AG04449 (cell line): ENCODE measurements at regions of chr9 and their contacts with region 1.

Region 1: GRCh38 chr9:16028548-16028947 is 475.7 kb downstream of the CCDC171 start:
- DNase-seq: no peak
- H3K4me3 ChIP-seq: no peak overlapping the region
- CTCF ChIP-seq: no peak

Region 2: DNA sequence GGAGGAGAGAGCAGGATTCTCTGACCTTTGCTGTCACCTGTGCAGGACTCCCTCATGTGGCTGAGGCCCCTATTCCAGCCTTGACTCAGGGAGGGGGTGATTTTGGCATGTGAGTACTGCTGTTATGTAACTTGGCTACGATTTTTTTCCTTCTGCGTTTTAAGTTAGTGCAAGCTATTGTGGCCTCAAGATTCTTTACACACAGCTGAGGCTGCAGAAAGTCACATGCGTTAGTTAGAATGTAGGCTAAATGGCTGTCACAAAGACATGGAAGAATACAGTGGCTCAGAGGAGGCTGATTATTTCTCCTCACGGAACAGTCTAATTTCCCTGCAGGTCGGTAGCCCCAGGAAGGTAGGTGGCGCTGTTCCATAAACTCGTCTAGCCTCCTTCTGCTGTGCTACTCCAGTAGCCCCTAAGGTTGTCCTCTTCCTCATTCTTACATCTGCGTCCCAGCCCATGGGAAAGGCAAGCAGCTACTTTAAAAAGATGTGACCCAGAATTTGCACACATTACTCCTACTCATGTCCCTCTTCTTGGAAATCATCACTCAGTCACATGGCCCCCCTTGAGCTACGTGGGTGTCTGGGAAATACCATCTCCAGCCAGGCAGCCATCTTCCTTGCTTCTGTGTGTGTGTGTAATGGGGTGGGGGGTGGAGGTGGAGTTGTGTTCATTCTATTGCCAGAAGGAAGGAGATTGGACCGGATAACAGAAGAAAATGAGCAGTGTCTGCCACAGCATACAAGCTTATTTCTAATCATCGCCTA is 10.9 kb after region 1 on chr9:
- CTCF ChIA-PET with region 1: interaction called, 16 read pairs
- POLR2A ChIA-PET with region 1: interaction called, 4 read pairs
- DNase-seq: no peak
- H3K4me3 ChIP-seq: no peak overlapping the region
- CTCF ChIP-seq: peak; percentile 23